ENCODE measurements at regions of chr6 and their contacts with region 1.

Region 1: GRCh38 chr6:113970805-113971676 is at the start of gene HDAC2:
- DNase-seq: peak; percentile 84
- H3K4me3 Mint-ChIP-seq: peak within 1 kb of the TSS; percentile 95
- H3K27ac Mint-ChIP-seq: peak within 1 kb of the TSS; percentile 95
- H3K4me1 Mint-ChIP-seq: peaks cover 31% of the 10 kb centered on the region
- H3K27me3 Mint-ChIP-seq: no peaks in the 10 kb centered on the region
- total RNA-seq, gene HDAC2: 75.8 to 82.3 TPM

Region 2: DNA sequence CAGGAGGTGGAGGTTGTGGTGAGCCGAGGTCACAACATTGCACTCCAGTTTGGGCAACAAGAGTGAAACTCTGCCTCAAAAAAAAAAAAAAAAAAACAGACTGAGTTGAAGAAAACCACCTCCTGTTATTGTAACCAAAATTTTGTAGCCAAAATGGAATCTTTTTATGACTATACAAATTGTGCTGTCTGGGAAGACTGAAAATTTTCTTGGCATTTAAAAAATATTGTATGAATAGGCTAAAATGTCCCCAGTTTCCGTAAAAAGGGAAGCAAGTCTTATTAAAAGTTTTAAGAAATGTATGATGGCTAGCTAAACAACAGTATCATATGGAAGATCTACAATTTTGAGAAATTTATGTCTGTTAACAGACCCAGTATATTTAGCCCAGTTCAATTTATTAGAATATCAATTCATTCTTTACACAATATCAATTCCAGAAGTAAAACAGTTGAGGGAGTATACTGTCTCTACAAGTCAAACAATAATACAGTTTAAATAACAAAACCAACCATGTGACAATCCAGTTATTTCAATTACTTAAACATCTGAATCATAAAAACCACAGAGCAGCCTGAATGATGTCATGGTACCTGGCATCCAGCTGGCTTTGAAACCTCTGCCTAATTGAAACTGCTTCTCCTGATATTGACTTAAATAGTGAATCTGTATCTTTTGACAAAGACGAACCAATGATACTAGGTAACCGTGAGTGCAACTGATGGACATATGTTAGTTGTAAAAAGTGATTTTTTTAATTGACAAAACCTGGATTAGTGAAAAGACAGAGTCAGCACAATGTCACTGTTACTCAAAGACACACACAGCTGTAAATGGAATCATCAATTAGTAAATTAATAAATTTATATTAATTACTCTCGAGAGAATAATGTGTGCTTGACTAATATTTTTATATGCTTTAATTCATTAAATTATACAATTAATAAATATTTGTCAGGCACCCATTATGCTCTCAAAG is 280.5 kb before region 1 on chr6:
- CTCF ChIA-PET with region 1: no interaction called
- intact Hi-C with region 1: no loop called
- DNase-seq: peak; percentile 24
- H3K4me3 Mint-ChIP-seq: no peak overlapping the region
- H3K27ac Mint-ChIP-seq: no peak overlapping the region
- H3K4me1 Mint-ChIP-seq: peaks cover 3% of the 10 kb centered on the region
- H3K27me3 Mint-ChIP-seq: no peaks in the 10 kb centered on the region

Region 3: GRCh38 chr6:113960795-113961194 is 10.2 kb before region 1 on chr6:
- CTCF ChIA-PET with region 1: interaction called, 3 read pairs
- intact Hi-C with region 1: loop called (anchors 1 kb)
- DNase-seq: no peak
- H3K4me3 Mint-ChIP-seq: no peak overlapping the region
- H3K27ac Mint-ChIP-seq: no peak overlapping the region
- H3K4me1 Mint-ChIP-seq: peaks cover 48% of the 10 kb centered on the region
- H3K27me3 Mint-ChIP-seq: no peaks in the 10 kb centered on the region

Measured in activated naive CD4-positive, alpha-beta T cell treated with anti-CD3 and anti-CD28 coated beads for 36 hours (primary cell).